Mucosa of descending colon (tissue), 3 donors: ENCODE measurements at regions of chr4 and their contacts with region 1.

Region 1: GRCh38 chr4:52038103-52038912 is at the start of gene SGCB:
- DNase-seq: peak; percentile 72 to 85 (median 78)
- ATAC-seq: peak; percentile 92
- H3K4me3 ChIP-seq: peak within 1 kb of the TSS; percentile 75
- H3K4me1 ChIP-seq: peaks cover 3% of the 10 kb centered on the region
- CTCF ChIP-seq: no peak
- total RNA-seq, gene SGCB: 23.8 to 80.1 (median 24.2) TPM

Region 2: GRCh38 chr4:51842554-51843308 is 195.6 kb before region 1 on chr4 and contains the start of gene DCUN1D4:
- intact Hi-C with region 1: loop called in 1 of 2 experiments (anchors 10 kb)
- DNase-seq: peak; percentile 100
- ATAC-seq: peak; percentile 91
- H3K4me3 ChIP-seq: peak within 1 kb of the TSS; percentile 76
- H3K4me1 ChIP-seq: peaks cover 10% of the 10 kb centered on the region
- CTCF ChIP-seq: peak; percentile 62
- total RNA-seq, gene DCUN1D4: 31.1 to 72.4 (median 39.0) TPM